ENCODE measurements at regions of chr7 and their contacts with region 1.

Region 1: GRCh38 chr7:50266635-50267386 is 37.7 kb upstream of the IKZF1 start:
- DNase-seq: peak; percentile 82
- H3K4me3 Mint-ChIP-seq: peak overlapping the region; percentile 70
- H3K27ac Mint-ChIP-seq: peak overlapping the region; percentile 98
- H3K4me1 Mint-ChIP-seq: peaks cover 89% of the 10 kb centered on the region
- H3K27me3 Mint-ChIP-seq: no peaks in the 10 kb centered on the region

Region 2: GRCh38 chr7:50119815-50120637 is 146.8 kb before region 1 on chr7:
- intact Hi-C with region 1: no loop called
- DNase-seq: peak; percentile 13
- H3K4me3 Mint-ChIP-seq: no peak overlapping the region
- H3K27ac Mint-ChIP-seq: no peak overlapping the region
- H3K4me1 Mint-ChIP-seq: no peaks in the 10 kb centered on the region
- H3K27me3 Mint-ChIP-seq: peaks cover 33% of the 10 kb centered on the region

Region 3: GRCh38 chr7:50147951-50148808 is 118.6 kb before region 1 on chr7:
- intact Hi-C with region 1: loop called (anchors 1 kb)
- DNase-seq: peak; percentile 17
- H3K4me3 Mint-ChIP-seq: no peak overlapping the region
- H3K27ac Mint-ChIP-seq: peak overlapping the region; percentile 83
- H3K4me1 Mint-ChIP-seq: peaks cover 70% of the 10 kb centered on the region
- H3K27me3 Mint-ChIP-seq: no peaks in the 10 kb centered on the region

Region 4: DNA sequence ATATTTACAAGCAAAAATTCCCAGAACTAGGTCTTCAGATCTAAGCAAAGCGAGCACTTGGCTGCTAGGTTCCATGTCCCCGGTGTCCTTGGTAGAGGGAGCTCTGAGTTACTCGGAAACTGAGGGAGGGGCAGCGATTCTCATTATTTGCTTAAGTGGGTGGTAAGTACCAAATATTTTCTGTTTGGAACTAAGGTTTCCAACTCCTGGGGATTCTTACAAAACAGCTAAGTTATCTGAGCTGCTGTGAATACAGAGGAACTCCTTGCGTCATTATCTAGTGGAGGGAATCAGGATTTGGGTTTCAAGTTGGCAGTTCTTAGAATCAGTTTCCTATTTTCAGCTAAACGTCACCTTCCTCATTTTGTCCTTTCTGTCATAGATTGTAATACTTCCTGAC is 39.1 kb before region 1 on chr7:
- intact Hi-C with region 1: loop called (anchors 1 kb)
- DNase-seq: no peak
- H3K4me3 Mint-ChIP-seq: peak overlapping the region; percentile 52
- H3K27ac Mint-ChIP-seq: peak overlapping the region; percentile 91
- H3K4me1 Mint-ChIP-seq: peaks cover 46% of the 10 kb centered on the region
- H3K27me3 Mint-ChIP-seq: no peaks in the 10 kb centered on the region

Region 5: DNA sequence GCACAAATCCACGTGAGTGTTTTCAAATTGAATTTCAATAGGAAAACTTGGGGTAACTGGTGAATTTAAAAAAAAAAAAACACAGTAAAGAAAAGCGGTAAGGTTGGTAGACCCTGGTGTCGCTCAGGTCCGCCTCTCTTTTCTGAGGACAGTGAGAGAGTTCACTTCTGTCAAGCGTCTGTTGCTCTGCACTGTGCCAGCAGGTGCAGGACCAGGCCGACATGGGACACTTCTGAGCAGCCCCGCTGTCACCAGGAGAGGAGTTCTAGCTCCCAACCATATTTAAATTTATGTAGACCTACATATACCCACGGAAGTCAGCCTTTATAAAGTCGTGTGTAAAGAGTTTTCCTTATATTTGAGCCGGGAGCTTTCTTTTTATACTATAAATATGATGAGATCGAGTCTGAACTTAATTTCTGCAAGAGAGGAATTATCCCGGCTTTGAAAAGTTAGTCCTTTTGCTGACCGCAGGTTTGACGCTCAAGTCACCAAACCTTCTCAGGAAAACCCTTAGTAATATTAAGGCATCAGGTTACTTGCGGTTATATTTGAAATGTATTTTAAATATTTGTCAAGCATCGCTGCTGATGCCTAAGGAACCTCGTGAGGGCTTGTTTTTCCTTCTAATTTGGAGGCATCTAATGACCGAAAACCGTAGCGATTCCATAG is 38.2 kb after region 1 on chr7:
- intact Hi-C with region 1: loop called (anchors 1 kb)
- DNase-seq: no peak
- H3K4me3 Mint-ChIP-seq: peak overlapping the region; percentile 99
- H3K27ac Mint-ChIP-seq: peak overlapping the region; percentile 98
- H3K4me1 Mint-ChIP-seq: peaks cover 52% of the 10 kb centered on the region
- H3K27me3 Mint-ChIP-seq: no peaks in the 10 kb centered on the region

Region 6: GRCh38 chr7:50349963-50350944 is 83.4 kb after region 1 on chr7:
- intact Hi-C with region 1: loop called (anchors 1 kb)
- DNase-seq: peak; percentile 77
- H3K4me3 Mint-ChIP-seq: peak overlapping the region; percentile 53
- H3K27ac Mint-ChIP-seq: peak overlapping the region; percentile 93
- H3K4me1 Mint-ChIP-seq: peaks cover 97% of the 10 kb centered on the region
- H3K27me3 Mint-ChIP-seq: no peaks in the 10 kb centered on the region

Region 7: GRCh38 chr7:50664461-50664922 is 397.7 kb after region 1 on chr7:
- intact Hi-C with region 1: loop called (anchors 5 kb)
- DNase-seq: no peak
- H3K4me3 Mint-ChIP-seq: no peak overlapping the region
- H3K27ac Mint-ChIP-seq: no peak overlapping the region
- H3K4me1 Mint-ChIP-seq: peaks cover 58% of the 10 kb centered on the region
- H3K27me3 Mint-ChIP-seq: peaks cover 3% of the 10 kb centered on the region

Measured in activated T-helper 1 cell treated with anti-CD3 and anti-CD28 coated beads, Interleukin-12 subunit alpha, Interleukin-12 subunit beta, Interleukin-2, Interleukin-4 antibody, amounts not matched to agents 30 ng/mL and 10 ng/mL and 1 ng/mL, durations not matched to agents 14 hours and 24 hours and 36 hours (primary cell).